ENCODE measurements at regions of chr6 and their contacts with region 1.

Region 1: DNA sequence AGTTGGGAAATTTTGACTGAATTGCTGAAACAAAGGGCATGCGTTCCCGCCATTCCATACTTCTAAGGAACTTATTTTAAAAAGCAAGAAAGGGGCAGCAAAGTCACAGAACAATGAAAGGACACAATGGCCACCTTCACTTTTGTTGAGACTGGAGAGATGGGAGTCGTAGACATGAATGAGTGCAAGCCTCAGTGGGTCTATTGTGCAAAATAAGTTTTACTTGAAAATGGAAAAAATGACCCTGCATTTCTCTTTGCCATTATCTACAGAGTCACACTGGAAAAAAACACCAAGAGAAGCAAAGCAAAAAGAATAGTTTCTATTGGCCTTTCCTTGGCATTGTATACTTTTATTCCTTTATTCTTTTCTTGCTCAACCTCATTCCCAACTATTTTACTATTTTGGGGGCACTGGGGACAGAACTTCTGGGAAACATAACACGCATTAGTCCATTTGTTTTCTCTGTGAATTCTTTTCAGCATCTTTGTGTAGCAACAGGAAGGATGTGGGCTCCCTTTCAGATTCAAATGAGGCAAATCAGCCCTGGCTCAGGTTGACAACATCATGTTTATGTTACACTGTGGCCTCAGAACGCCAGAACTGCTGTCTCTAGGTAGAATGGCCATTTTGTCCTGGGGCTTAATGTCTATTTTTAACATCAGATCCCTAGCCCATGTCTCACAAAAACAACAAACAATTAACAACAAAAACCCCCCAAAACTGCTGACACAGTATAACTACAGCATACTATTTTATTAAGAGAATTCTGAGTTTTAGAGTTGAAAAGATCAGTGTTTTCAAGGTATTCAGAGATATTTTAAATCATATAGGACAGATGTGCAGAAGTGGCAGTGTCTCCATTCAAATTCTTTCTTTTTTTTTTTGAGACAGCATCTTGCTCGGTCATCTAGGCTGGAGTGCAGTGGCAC is 122.2 kb downstream of the FYN start:
- DNase-seq: peak; percentile 84
- H3K4me3 Mint-ChIP-seq: peak overlapping the region; percentile 64
- H3K27ac Mint-ChIP-seq: peak overlapping the region; percentile 98
- H3K4me1 Mint-ChIP-seq: peaks cover 95% of the 10 kb centered on the region
- H3K27me3 Mint-ChIP-seq: no peaks in the 10 kb centered on the region

Region 2: GRCh38 chr6:111764238-111765175 is 13.5 kb after region 1 on chr6:
- CTCF ChIA-PET with region 1: interaction called, 23 read pairs
- POLR2A ChIA-PET with region 1: interaction called, 4 read pairs
- DNase-seq: peak; percentile 47
- H3K4me3 Mint-ChIP-seq: peak overlapping the region; percentile 17
- H3K27ac Mint-ChIP-seq: peak overlapping the region; percentile 91
- H3K4me1 Mint-ChIP-seq: peaks cover 100% of the 10 kb centered on the region
- H3K27me3 Mint-ChIP-seq: no peaks in the 10 kb centered on the region